ENCODE measurements at regions of chr9 and their contacts with region 1.

Region 1: GRCh38 chr9:84174486-84174885 is 166.1 kb downstream of the SLC28A3 start:
- DNase-seq: no peak
- H3K4me3 ChIP-seq: no peak overlapping the region
- H3K27me3 ChIP-seq: no peaks in the 10 kb centered on the region
- CTCF ChIP-seq: no peak

Region 2: DNA sequence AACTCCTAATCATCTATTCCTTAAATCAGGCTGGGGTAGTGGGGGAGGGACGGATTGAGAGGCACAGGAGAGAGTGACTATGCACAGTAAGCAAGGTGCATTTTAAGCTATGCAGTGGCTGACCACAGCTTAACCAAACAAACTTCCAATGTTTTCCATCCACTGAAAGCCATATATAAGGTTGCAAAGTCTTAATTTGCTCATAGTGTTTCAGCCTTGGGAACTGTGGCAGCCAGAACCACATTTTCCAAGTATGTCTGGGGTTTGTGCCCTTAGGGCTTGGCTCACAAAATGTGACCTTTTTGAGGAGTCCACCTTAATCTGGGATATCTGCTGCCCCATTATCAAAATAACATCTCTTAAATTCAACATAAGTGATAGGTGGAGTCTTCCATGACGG is 451.8 kb before region 1 on chr9:
- CTCF ChIA-PET with region 1: no interaction called
- POLR2A ChIA-PET with region 1: no interaction called
- DNase-seq: no peak
- H3K4me3 ChIP-seq: no peak overlapping the region
- H3K27me3 ChIP-seq: no peaks in the 10 kb centered on the region
- CTCF ChIP-seq: no peak

Region 3: DNA sequence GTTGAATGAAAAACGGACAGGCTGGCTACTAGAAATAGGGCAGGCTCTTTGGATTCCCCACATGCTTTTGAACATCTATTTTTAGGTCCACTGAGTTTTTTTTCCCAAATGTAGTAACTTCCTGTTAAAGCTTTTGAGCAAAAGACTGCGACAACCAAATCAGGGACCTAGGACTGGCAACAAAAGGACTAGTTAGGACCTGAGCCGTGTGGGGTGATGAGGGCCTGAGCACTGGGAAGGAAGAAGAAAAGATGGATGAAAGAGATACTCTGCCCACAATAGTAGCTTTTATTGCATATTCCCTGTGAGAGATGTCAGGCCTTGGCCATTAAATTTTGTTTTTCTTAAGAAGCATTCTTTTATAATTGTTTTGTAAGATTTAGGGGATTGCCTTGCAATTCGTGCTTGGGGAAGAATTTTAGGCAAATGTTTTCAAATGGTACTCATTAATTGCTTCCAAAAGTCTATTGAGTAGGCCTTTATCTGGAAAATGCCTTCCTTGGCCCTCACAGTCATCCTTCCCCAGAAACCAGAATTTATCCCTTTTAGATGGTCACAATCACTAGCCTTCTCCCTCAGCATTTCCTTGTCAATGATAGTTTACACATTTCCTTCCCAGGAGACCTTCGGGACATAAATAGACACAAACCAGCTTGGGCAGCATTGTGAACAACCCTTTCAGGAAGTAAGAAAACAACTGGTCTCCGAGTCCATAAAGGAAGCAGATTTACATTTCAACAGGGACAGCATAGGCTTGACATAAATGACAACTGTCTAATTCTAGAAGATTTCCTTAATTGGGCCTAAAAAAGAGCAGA is 27.4 kb before region 1 on chr9:
- CTCF ChIA-PET with region 1: interaction called, 15 read pairs
- POLR2A ChIA-PET with region 1: no interaction called
- DNase-seq: peak; percentile 90
- H3K4me3 ChIP-seq: no peak overlapping the region
- H3K27me3 ChIP-seq: no peaks in the 10 kb centered on the region
- CTCF ChIP-seq: no peak

Region 4: DNA sequence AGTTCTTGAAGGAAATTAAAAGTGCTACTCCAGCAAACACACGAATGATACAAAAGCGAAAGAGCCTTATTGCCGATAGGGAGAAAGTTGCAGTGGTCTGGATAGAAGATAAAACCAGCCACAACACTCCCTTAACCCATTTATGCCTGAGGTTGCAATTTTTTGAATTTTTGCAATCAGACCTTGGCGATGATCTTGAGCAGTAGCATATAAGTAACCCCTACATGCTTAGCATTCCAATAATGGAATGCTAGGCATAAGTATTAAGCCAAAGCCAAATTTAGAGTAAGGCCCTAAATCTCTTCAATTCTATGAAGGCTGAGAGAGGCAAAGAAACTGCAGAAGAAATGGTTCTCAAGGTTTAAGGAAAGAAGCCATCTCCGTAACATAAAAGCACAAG is 12.6 kb after region 1 on chr9:
- CTCF ChIA-PET with region 1: interaction called, 16 read pairs
- POLR2A ChIA-PET with region 1: no interaction called
- DNase-seq: no peak
- H3K4me3 ChIP-seq: no peak overlapping the region
- H3K27me3 ChIP-seq: no peaks in the 10 kb centered on the region; the same call in 1 of the 2 replicates
- CTCF ChIP-seq: no peak

Region 5: GRCh38 chr9:84357275-84357674 is 182.8 kb after region 1 on chr9:
- CTCF ChIA-PET with region 1: no interaction called
- POLR2A ChIA-PET with region 1: no interaction called
- DNase-seq: no peak
- H3K4me3 ChIP-seq: no peak overlapping the region
- H3K27me3 ChIP-seq: no peaks in the 10 kb centered on the region
- CTCF ChIP-seq: no peak

Measured in BJ (cell line).